Activated naive CD4-positive, alpha-beta T cell treated with anti-CD3 and anti-CD28 coated beads for 36 hours (primary cell): ENCODE measurements at regions of chr12 and their contacts with region 1.

Region 1: DNA sequence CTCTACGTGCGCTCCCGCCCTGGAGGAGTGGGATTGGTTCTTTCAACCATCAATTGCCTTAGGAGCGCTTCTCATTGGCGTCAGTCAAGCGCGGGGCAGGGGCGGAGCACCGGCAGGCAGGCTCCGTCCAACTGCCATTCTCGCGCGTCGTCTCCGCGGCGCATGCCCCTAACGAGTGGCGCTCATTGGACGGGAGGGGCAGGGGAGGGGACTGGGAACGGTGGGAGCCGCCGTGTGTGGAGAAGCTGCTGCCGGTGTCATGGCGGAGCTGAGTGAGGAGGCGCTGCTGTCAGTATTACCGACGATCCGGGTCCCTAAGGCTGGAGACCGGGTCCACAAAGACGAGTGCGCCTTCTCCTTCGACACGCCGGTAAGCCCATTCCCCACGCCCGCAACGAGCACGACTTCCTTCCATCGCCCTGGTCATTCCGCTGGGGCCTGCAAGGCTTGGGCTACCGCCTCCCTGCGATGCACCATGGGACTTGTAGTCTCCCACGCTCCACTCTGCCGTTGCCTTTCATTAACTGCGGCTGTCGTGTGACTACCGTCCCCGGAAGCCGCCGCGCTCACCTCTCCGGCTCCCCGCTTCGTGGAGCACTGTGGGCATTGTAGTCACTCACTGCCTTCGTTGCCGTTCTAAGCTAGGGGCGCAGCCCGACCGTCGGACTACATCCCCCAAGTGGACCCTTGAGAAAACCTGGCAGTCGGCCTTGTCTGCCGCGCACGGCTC is at the start of gene USP5:
- DNase-seq: peak; percentile 99
- H3K4me3 Mint-ChIP-seq: peak within 1 kb of the TSS; percentile 86
- H3K27ac Mint-ChIP-seq: peak within 1 kb of the TSS; percentile 93
- H3K4me1 Mint-ChIP-seq: peaks cover 35% of the 10 kb centered on the region
- H3K27me3 Mint-ChIP-seq: no peaks in the 10 kb centered on the region
- total RNA-seq, gene USP5: 115 to 123 TPM

Region 2: GRCh38 chr12:6430124-6430989 is 421.7 kb before region 1 on chr12:
- CTCF ChIA-PET with region 1: no interaction called
- intact Hi-C with region 1: loop called (anchors 1 kb)
- DNase-seq: peak; percentile 78
- H3K4me3 Mint-ChIP-seq: peak overlapping the region; percentile 46
- H3K27ac Mint-ChIP-seq: peak overlapping the region; percentile 84
- H3K4me1 Mint-ChIP-seq: peaks cover 85% of the 10 kb centered on the region
- H3K27me3 Mint-ChIP-seq: no peaks in the 10 kb centered on the region

Region 3: GRCh38 chr12:6563448-6564050 is 288.5 kb before region 1 on chr12:
- CTCF ChIA-PET with region 1: no interaction called
- intact Hi-C with region 1: loop called (anchors 1 kb)
- DNase-seq: peak; percentile 79
- H3K4me3 Mint-ChIP-seq: no peak overlapping the region
- H3K27ac Mint-ChIP-seq: peak overlapping the region; percentile 36
- H3K4me1 Mint-ChIP-seq: peaks cover 39% of the 10 kb centered on the region
- H3K27me3 Mint-ChIP-seq: no peaks in the 10 kb centered on the region

Region 4: DNA sequence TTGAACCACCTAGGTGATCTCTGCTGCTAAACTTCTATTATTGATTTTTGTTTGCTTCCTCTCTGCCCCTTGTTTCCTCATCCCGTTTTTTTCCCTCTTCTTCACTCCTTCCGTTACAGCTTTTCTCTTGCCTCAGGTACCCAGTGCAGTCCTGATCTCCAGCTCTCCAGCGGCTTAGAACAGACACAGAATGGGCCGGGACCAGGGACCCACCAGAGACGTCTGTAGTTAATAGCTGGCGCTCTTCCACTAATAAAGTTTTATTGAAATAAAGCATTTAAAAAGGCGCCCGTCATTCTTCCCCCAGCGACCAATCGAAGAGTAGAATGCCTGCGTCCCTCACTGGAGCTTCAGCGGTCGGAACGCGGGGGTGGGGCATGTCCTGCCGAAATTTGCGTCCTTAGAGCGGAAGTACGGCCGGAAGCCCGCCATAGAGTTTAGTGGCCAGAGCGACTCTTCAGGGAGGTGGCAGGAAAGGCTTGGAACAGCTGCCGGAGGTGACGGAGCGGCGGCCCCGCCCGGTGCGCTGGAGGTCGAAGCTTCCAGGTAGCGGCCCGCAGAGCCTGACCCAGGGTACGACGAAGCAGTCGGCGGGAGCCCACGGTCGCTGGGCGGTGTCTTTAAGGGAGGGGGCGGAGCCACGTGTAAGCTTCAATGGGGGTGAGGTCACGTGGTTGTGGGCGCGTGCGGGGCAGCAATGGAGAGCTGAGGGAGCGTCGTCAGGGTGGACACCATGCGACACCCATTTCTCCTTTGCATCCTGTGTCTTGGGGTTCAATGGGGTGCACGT is 128.3 kb before region 1 on chr12 and contains the start of gene COPS7A:
- CTCF ChIA-PET with region 1: interaction called, 3 read pairs
- intact Hi-C with region 1: loop called (anchors 1 kb)
- DNase-seq: peak; percentile 98
- H3K4me3 Mint-ChIP-seq: peak within 1 kb of the TSS; percentile 91
- H3K27ac Mint-ChIP-seq: peak within 1 kb of the TSS; percentile 89
- H3K4me1 Mint-ChIP-seq: peaks cover 25% of the 10 kb centered on the region
- H3K27me3 Mint-ChIP-seq: no peaks in the 10 kb centered on the region
- total RNA-seq, gene COPS7A: 43.0 to 47.8 TPM

Region 5: GRCh38 chr12:6818222-6818621 is 33.9 kb before region 1 on chr12:
- CTCF ChIA-PET with region 1: no interaction called
- intact Hi-C with region 1: no loop called
- DNase-seq: no peak
- H3K4me3 Mint-ChIP-seq: no peak overlapping the region
- H3K27ac Mint-ChIP-seq: no peak overlapping the region
- H3K4me1 Mint-ChIP-seq: peaks cover 11% of the 10 kb centered on the region
- H3K27me3 Mint-ChIP-seq: peaks cover 2% of the 10 kb centered on the region

Region 6: GRCh38 chr12:6833189-6833890 is 18.7 kb before region 1 on chr12:
- CTCF ChIA-PET with region 1: interaction called, 10 read pairs
- intact Hi-C with region 1: loop called (anchors 1 kb)
- DNase-seq: no peak
- H3K4me3 Mint-ChIP-seq: no peak overlapping the region
- H3K27ac Mint-ChIP-seq: no peak overlapping the region
- H3K4me1 Mint-ChIP-seq: peaks cover 10% of the 10 kb centered on the region
- H3K27me3 Mint-ChIP-seq: no peaks in the 10 kb centered on the region

Region 7: GRCh38 chr12:6904280-6905278 is 52.5 kb after region 1 on chr12 and contains the start of gene LRRC23:
- CTCF ChIA-PET with region 1: no interaction called
- intact Hi-C with region 1: loop called (anchors 1 kb)
- DNase-seq: peak; percentile 99
- H3K4me3 Mint-ChIP-seq: no peak within 1 kb of the TSS
- H3K27ac Mint-ChIP-seq: no peak within 1 kb of the TSS
- H3K4me1 Mint-ChIP-seq: peaks cover 3% of the 10 kb centered on the region
- H3K27me3 Mint-ChIP-seq: no peaks in the 10 kb centered on the region
- total RNA-seq, gene LRRC23: 6.3 to 6.4 TPM

Region 8: DNA sequence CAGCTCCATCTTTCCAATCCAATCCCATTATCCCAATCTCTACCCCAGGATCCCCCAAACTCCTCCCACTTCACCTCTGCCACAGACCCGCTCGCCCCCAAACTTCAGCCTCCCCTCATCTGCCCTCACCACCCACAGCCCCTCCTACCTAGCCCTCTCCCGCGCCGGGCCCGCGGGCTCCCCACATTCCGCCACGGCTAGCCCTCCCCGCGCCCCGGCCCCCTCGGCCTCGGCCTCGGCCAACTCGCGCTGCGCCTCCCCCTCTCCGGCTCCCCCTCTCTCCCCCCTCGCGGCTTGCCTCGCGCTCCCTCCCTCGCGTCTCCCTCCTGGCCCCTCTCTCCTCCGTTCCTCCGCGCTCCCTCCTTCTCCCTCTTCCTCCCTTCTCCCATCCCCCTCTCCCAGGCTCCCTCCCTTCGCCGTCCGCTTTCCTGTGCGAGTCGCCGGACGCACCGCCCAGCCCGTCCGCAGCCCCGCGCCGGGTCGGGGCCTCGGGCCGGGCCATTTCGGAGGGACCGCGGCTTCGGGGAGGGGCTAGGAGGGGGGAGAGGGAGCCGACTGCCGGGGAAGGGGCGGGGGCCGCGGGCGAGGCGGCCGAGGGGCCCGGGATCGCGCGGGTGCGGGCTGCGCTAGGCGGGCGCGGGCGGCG is 75.4 kb after region 1 on chr12 and contains the start of gene ATN1:
- CTCF ChIA-PET with region 1: no interaction called
- intact Hi-C with region 1: no loop called
- DNase-seq: peak; percentile 51
- H3K4me3 Mint-ChIP-seq: peak within 1 kb of the TSS; percentile 75
- H3K27ac Mint-ChIP-seq: peak within 1 kb of the TSS; percentile 81
- H3K4me1 Mint-ChIP-seq: peaks cover 59% of the 10 kb centered on the region
- H3K27me3 Mint-ChIP-seq: no peaks in the 10 kb centered on the region
- total RNA-seq, gene ATN1: 20.1 to 22.2 TPM

Region 9: DNA sequence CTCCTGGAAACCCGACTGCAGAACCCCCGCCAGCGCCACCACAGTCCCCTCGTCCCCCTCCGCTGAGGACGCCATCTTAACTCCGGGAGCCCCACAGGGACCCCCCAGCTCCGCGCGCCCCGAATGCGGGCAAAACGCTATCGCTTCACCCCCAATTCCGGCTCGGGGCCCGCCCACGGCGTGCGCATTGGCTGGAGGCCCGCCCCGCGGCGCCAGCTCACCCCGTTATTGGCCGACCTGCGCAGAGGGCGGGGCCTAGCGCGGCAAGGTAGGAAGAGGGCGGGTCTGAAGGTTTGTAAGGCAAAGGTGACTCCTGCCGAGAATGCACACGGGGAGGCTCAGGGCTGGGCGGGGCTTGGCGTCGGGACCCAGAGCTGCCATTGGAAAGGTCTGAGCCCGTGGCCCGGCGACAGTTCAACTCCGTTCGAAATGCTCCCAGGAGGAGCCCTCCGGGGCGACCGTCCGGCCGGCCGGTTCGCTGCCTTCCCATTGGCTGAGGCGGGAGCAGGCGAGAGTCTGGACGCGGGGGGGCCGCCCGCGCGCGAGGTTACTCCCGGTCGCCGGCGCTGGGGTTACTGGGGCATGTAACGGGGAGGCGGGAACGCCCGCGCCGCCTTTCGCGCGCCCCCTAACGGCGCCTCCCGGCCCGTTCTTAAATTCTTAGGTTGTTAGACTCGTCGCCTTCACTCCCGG is 166.4 kb after region 1 on chr12 and contains the start of gene LPCAT3:
- CTCF ChIA-PET with region 1: no interaction called
- intact Hi-C with region 1: loop called (anchors 1 kb)
- DNase-seq: peak; percentile 98
- H3K4me3 Mint-ChIP-seq: peak within 1 kb of the TSS; percentile 94
- H3K27ac Mint-ChIP-seq: peak within 1 kb of the TSS; percentile 92
- H3K4me1 Mint-ChIP-seq: peaks cover 35% of the 10 kb centered on the region
- H3K27me3 Mint-ChIP-seq: no peaks in the 10 kb centered on the region
- total RNA-seq, gene LPCAT3: 22.7 to 27.2 TPM

Region 10: GRCh38 chr12:7472060-7472459 is 620.0 kb after region 1 on chr12:
- CTCF ChIA-PET with region 1: no interaction called
- intact Hi-C with region 1: no loop called
- DNase-seq: no peak
- H3K4me3 Mint-ChIP-seq: no peak overlapping the region
- H3K27ac Mint-ChIP-seq: no peak overlapping the region
- H3K4me1 Mint-ChIP-seq: no peaks in the 10 kb centered on the region
- H3K27me3 Mint-ChIP-seq: peaks cover 4% of the 10 kb centered on the region

Region 11: GRCh38 chr12:7628381-7628961 is 776.4 kb after region 1 on chr12:
- CTCF ChIA-PET with region 1: no interaction called
- intact Hi-C with region 1: no loop called
- DNase-seq: no peak
- H3K4me3 Mint-ChIP-seq: no peak overlapping the region
- H3K27ac Mint-ChIP-seq: no peak overlapping the region
- H3K4me1 Mint-ChIP-seq: no peaks in the 10 kb centered on the region
- H3K27me3 Mint-ChIP-seq: no peaks in the 10 kb centered on the region